Activated CD4-positive, alpha-beta memory T cell treated with anti-CD3 and anti-CD28 coated beads, Interleukin-2, amount 10 ng/mL, durations not matched to agents 7 days and 5 days (primary cell): ENCODE measurements at regions of chr18 and their contacts with region 1.

Region 1: GRCh38 chr18:62505669-62506494 is 16.9 kb upstream of the ZCCHC2 start:
- DNase-seq: peak; percentile 48
- H3K4me3 Mint-ChIP-seq: peak overlapping the region; percentile 70
- H3K27ac Mint-ChIP-seq: peak overlapping the region; percentile 100
- H3K4me1 Mint-ChIP-seq: peaks cover 24% of the 10 kb centered on the region
- H3K27me3 Mint-ChIP-seq: no peaks in the 10 kb centered on the region

Region 2: DNA sequence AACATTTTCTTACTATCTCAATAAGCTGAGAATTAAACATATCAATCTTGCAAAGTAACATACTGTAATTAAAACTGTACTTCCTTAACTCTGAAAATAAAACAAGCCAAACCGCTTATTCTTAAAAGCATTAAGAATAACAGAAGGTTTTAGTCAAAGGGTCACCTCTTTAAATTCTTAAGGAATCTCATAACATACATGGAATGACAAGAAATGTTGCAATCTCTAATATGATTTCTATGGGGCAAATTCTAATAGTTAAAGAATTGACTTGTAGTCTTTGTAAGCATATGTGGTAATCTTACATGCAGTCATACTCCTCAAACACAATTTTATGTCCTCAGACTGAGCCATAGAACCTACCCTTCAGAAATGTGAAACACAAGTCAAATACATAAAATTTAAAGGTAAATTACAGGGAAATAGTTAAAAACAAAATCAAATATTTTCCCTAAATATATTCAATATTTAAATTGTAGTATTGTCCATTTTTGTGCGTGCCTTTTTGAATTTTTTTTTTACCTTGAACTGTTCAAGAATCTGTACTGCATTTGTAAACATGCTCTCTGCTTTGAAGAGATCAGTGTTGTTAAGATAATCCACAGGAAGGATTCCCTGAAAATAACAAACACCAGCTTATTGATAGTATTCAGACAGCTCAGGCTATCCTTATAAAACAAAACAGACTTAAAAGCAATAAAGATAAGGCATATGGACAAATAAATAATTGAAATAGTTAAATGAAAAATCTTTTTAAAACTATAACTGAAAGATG is 367.2 kb before region 1 on chr18:
- CTCF ChIA-PET with region 1: no interaction called
- POLR2A ChIA-PET with region 1: no interaction called
- DNase-seq: no peak
- H3K4me3 Mint-ChIP-seq: no peak overlapping the region
- H3K27ac Mint-ChIP-seq: no peak overlapping the region
- H3K4me1 Mint-ChIP-seq: no peaks in the 10 kb centered on the region
- H3K27me3 Mint-ChIP-seq: no peaks in the 10 kb centered on the region

Region 3: DNA sequence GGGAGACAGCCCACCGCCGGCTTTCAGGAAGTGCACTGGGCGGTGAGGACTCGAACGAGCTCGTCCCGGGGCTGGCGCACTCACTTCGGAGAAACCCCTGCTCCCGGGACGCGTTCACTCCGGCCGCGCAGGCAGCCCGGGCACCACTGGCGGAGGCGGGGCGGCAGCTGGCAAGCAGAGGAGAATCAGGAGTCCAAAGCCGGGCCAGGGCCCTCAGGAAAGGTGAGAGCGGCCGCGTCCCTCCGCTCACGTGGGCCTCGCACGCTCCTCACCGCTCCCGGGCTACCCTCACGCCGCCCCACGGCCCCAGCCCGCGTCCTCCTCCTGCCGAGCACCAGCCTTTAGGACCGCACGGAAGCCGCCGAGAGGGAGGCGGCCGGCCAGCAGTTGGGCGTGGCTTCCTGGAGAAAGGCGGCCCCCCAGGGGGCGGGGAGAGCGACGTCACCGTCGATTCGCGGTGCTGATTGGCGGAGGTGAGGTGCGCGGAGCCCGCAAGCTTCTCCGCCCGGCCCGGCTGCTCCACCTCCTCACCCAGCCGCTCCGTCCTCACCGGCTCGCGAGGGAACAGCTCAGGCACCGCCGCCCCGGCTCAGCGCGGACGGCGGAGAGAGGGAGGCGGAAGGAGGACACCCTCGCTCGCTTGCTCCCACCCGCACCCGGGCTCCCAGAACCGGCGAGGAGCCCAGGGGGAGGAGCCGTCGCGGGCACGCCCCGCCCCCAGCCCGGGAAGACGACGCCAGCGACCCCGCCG is 16.8 kb after region 1 on chr18 and contains the start of gene ZCCHC2:
- CTCF ChIA-PET with region 1: interaction called, 24 read pairs
- POLR2A ChIA-PET with region 1: interaction called, 140 read pairs
- DNase-seq: peak; percentile 99
- H3K4me3 Mint-ChIP-seq: peak within 1 kb of the TSS; percentile 93
- H3K27ac Mint-ChIP-seq: peak within 1 kb of the TSS; percentile 96
- H3K4me1 Mint-ChIP-seq: peaks cover 21% of the 10 kb centered on the region
- H3K27me3 Mint-ChIP-seq: no peaks in the 10 kb centered on the region
- total RNA-seq, gene ZCCHC2: 51.7 to 52.3 TPM